Left lung (tissue), 14 donors: ENCODE measurements at regions of chr2 and their contacts with region 1.

Region 1: GRCh38 chr2:134118279-134119116 is 135.4 kb upstream of the MGAT5 start:
- DNase-seq: peak in 3 of 4 donors; percentile 75 to 91 (median 89)
- ATAC-seq: peak; percentile 74
- H3K4me3 ChIP-seq: no peak overlapping the region
- H3K27ac ChIP-seq: peak overlapping the region; percentile 91 to 94
- H3K4me1 ChIP-seq: peaks cover 12 to 44% of the 10 kb centered on the region in 2 donors
- H3K27me3 ChIP-seq: no peaks in the 10 kb centered on the region
- CTCF ChIP-seq: peak; percentile 75 to 82

Region 2: DNA sequence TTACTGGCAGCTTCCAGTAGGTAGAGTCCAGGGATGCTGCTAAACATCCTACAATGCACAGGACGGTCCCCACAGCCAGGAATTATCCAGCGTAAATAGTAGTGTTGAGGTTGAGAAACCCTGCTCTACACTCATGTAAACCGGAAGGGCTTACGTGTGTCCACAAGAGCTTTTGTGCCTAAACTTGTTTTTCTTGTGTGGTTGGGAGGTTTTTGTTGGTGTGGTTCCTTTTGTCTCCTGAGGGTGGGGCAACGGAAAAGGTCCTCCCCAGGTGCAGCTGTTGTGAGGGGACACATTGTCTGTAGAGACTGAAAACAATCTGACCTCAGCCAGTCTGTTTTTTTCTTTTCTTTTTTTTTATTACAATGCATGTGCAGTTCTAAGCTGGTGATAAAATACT is 62.7 kb after region 1 on chr2:
- intact Hi-C with region 1: loop called in 1 of 2 experiments (anchors 10 kb)
- DNase-seq: peak in 1 of 4 donors; percentile 27
- ATAC-seq: peak; percentile 80
- H3K4me3 ChIP-seq: no peak overlapping the region
- H3K27ac ChIP-seq: no peak overlapping the region
- H3K4me1 ChIP-seq: peaks cover 5 to 26% of the 10 kb centered on the region in 2 donors
- H3K27me3 ChIP-seq: no peaks in the 10 kb centered on the region
- CTCF ChIP-seq: no peak

Region 3: GRCh38 chr2:134411828-134412638 is 293.5 kb after region 1 on chr2:
- intact Hi-C with region 1: loop called in 1 of 2 experiments (anchors 10 kb)
- DNase-seq: peak in 3 of 4 donors; percentile 62 to 87 (median 66)
- ATAC-seq: peak; percentile 93
- H3K4me3 ChIP-seq: no peak overlapping the region
- H3K27ac ChIP-seq: no peak overlapping the region
- H3K4me1 ChIP-seq: peaks cover 6 to 46% of the 10 kb centered on the region in 2 donors
- H3K27me3 ChIP-seq: no peaks in the 10 kb centered on the region
- CTCF ChIP-seq: peak; percentile 43 to 49

Region 4: GRCh38 chr2:134446383-134447017 is 328.0 kb after region 1 on chr2:
- intact Hi-C with region 1: loop called in 1 of 2 experiments (anchors 10 kb)
- DNase-seq: peak in 1 of 4 donors; percentile 53
- ATAC-seq: no peak
- H3K4me3 ChIP-seq: no peak overlapping the region
- H3K27ac ChIP-seq: no peak overlapping the region
- H3K4me1 ChIP-seq: no peaks in the 10 kb centered on the region
- H3K27me3 ChIP-seq: no peaks in the 10 kb centered on the region
- CTCF ChIP-seq: no peak